Activated CD4-positive, alpha-beta T cell treated with anti-CD3 and anti-CD28 coated beads, Interleukin-2, amount 10 ng/mL, durations not matched to agents 24 days and 14 days (primary cell): ENCODE measurements at regions of chr1 and their contacts with region 1.

Region 1: GRCh38 chr1:45686317-45687013 is at the start of gene GPBP1L1:
- DNase-seq: peak; percentile 99
- H3K4me3 Mint-ChIP-seq: peak within 1 kb of the TSS; percentile 98
- H3K27ac Mint-ChIP-seq: peak within 1 kb of the TSS; percentile 97
- H3K4me1 Mint-ChIP-seq: peaks cover 31% of the 10 kb centered on the region
- H3K27me3 Mint-ChIP-seq: no peaks in the 10 kb centered on the region
- total RNA-seq, gene GPBP1L1: 101 and 104 TPM in 2 replicates

Region 2: DNA sequence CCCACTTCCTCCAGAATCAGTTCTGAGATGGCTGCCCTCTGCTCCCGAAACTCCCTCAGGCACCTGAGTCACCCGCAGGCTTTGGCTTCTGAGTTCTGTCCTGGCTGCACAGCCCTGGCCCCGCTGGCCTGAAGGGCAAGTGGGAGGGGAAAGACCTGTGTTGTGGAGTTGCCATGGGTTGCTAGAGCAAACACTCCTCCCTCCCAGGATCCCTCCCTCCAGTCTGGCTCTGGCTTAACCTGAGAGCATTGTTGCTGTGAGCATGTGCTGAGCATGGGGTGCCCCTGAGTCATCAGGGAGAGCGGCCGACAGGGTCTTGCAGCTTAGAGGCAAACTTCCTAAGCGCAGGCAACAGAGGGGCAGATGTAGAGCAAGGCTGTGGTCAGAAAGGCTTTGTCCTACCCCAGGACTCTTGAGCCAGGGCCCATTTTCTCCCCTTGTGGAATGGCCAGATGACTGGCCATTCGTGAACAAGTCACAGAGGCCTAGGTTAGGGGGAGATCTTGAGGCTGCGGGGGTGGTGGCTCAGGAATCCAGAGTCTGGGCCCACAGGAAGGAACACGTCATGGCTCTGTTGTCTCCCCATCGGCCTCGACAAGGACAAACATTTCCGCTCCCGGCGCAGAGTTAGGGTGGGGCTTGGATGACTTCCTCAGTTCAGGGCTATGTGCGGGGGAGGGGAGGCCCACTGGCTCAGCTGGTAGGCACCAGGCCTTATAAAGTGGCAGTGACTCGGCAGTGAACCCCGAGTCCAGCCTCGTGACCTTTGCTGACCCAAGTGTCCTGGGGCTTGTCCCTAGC is 879.0 kb before region 1 on chr1 and contains the start of gene DYNLT4:
- intact Hi-C with region 1: loop called (anchors 5 kb)
- DNase-seq: peak; percentile 96
- H3K4me3 Mint-ChIP-seq: peak within 1 kb of the TSS; percentile 81
- H3K27ac Mint-ChIP-seq: peak within 1 kb of the TSS; percentile 99
- H3K4me1 Mint-ChIP-seq: peaks cover 81% of the 10 kb centered on the region
- H3K27me3 Mint-ChIP-seq: peaks cover 2% of the 10 kb centered on the region
- total RNA-seq, gene DYNLT4: 0.28 TPM in 1 of 2 replicates, not detected in the other

Region 3: DNA sequence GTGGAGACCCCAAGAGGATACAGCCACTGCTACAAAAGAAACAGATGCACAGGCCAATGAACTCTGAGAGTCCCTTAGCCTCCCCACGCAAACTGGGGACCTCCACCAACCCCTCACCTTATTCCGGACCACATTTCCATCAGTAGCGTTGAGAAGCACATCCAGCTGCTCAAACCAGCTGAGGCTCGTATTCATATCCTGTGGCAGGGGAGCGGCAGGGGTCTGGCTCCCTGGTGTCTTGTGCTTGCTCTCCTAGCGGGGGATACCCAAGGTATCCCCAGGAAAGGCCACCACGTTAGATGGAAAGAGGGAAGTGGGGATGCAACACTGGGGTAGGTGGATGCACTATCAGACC is 187.1 kb before region 1 on chr1:
- intact Hi-C with region 1: loop called (anchors 1 kb)
- DNase-seq: peak; percentile 74
- H3K4me3 Mint-ChIP-seq: peak overlapping the region; percentile 95
- H3K27ac Mint-ChIP-seq: peak overlapping the region; percentile 90
- H3K4me1 Mint-ChIP-seq: peaks cover 30% of the 10 kb centered on the region
- H3K27me3 Mint-ChIP-seq: no peaks in the 10 kb centered on the region

Region 4: DNA sequence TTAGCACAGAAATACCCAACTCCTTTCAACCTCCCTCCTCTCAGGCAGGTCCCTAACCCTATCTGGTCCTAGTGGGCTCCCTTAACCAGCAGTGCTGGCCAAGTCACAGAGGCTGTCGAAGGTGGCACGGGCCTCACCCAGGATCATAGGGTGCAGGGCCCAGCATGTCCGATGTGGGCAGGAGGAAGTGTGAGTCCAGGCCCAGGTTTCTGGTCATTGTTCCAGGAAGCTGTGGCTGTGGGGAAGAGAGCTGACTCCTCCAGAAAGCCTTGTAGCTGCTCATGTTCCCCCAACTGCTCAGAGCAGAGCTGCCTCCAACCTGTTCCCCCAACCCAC is 65.0 kb before region 1 on chr1:
- intact Hi-C with region 1: no loop called
- DNase-seq: no peak
- H3K4me3 Mint-ChIP-seq: no peak overlapping the region
- H3K27ac Mint-ChIP-seq: peak overlapping the region; percentile 51
- H3K4me1 Mint-ChIP-seq: no peaks in the 10 kb centered on the region
- H3K27me3 Mint-ChIP-seq: no peaks in the 10 kb centered on the region

Region 5: DNA sequence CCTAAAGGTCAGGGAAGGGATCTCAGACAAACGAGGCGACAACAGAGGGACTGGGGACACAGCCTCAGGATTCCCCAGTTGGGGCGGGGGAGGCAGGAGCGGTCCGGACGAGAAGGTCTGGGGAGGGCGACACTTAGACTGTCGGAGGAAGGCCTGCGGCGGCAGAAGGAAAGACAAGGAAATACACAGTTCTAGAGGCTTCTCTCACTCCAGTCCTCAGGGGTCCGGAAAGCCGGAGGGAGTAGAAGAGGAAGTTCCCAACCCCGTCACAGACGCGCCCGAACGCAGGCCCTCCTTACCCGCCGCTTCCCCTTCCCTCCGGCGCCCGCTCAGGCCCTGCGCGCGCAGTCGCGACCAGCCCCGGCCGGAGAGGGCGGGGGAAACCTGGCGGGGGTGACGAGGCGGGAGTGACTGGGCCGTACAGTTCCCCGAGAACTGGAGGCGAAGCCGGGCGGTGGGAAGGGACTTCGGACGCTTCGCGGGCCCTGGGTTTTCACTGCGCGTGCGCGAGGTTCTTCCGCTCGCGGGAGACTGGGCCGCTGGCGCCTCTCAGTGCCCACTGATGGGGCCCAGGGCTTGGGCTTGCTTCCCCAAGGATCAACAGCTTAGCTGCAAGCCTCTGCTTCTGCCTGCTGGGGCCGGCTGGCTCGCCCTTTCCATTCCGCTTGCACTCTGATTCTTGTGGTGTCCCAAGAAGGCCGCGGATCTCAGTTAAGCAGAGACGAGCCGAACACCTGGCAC is 64.0 kb after region 1 on chr1 and contains the start of gene IPP:
- intact Hi-C with region 1: loop called (anchors 1 kb)
- DNase-seq: peak; percentile 99
- H3K4me3 Mint-ChIP-seq: peak within 1 kb of the TSS; percentile 100
- H3K27ac Mint-ChIP-seq: peak within 1 kb of the TSS; percentile 97
- H3K4me1 Mint-ChIP-seq: peaks cover 14% of the 10 kb centered on the region
- H3K27me3 Mint-ChIP-seq: no peaks in the 10 kb centered on the region
- total RNA-seq, gene IPP: 13.8 and 15.3 TPM in 2 replicates

Region 6: GRCh38 chr1:46247436-46248121 is 561.1 kb after region 1 on chr1 and contains the start of gene RAD54L:
- intact Hi-C with region 1: loop called (anchors 1 kb)
- DNase-seq: peak; percentile 99
- H3K4me3 Mint-ChIP-seq: peak within 1 kb of the TSS; percentile 90
- H3K27ac Mint-ChIP-seq: peak within 1 kb of the TSS; percentile 96
- H3K4me1 Mint-ChIP-seq: peaks cover 36% of the 10 kb centered on the region
- H3K27me3 Mint-ChIP-seq: no peaks in the 10 kb centered on the region
- total RNA-seq, gene RAD54L: 55.5 and 59.6 TPM in 2 replicates